ENCODE measurements at regions of chr9 and their contacts with region 1.

Region 1: DNA sequence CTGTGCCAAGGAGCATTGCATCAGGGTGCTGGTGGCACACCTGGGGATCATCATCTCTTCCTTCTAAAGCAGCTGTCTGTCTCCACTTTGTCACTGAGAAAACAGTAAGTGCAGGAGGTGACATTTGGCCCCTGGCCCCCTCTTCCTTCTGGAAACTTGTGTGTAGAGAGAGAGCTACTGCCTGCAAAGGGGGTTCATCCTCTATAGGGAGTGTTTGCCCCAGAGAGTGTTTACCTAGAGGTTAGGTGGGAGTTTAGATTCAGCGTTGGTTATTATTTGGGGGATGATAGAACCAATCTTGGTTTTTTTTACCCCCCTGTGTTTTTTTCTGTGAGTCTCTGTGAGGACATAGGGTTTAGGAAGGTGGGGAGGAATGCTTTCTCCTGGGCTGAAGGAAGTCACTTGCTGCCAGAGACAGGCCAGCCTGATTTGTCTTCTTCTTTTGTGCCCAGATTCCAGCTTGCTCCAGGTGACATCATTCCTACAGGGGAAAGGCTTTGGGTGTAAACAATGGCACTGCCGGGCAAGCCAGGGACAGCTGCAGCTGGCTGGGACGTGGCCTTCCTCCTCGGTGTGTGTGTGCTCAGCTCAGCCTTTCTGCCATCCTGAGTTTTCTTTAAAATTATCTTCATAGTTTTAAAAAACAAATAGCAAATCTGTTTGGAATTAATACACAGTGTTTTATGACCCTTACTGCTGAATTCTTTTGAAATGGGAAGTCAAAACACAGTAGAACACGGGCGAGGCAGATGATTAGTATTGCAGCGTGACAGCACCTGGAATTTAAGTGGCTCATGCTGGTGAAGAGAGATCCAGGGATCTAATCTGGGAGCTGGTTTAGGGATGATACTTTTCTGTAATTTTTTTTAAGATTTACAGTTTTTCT is 24.5 kb downstream of the PRRC2B start:
- DNase-seq: no peak
- ATAC-seq: no peak
- H3K4me3 ChIP-seq: no peak overlapping the region
- H3K4me3 Mint-ChIP-seq: peak overlapping the region; percentile 80
- H3K27ac ChIP-seq: no peak overlapping the region
- H3K27ac Mint-ChIP-seq: peak overlapping the region; percentile 70
- H3K4me1 ChIP-seq: peaks cover 84% of the 10 kb centered on the region
- H3K4me1 Mint-ChIP-seq: peaks cover 95% of the 10 kb centered on the region
- H3K27me3 ChIP-seq: no peaks in the 10 kb centered on the region
- H3K27me3 Mint-ChIP-seq: no peaks in the 10 kb centered on the region
- CTCF ChIP-seq: no peak

Region 2: GRCh38 chr9:131407717-131408195 is 10.6 kb before region 1 on chr9:
- CTCF ChIA-PET with region 1: interaction called, 5 read pairs
- POLR2A ChIA-PET with region 1: interaction called, 18 read pairs
- intact Hi-C with region 1: no loop called
- DNase-seq: peak in 12 of 14 experiments; percentile 26 to 81 (median 52)
- ATAC-seq: peak; percentile 78
- H3K4me3 ChIP-seq: peak overlapping the region; percentile 39
- H3K4me3 Mint-ChIP-seq: peak overlapping the region; percentile 89
- H3K27ac ChIP-seq: peak overlapping the region; percentile 18 to 39
- H3K27ac Mint-ChIP-seq: peak overlapping the region; percentile 86
- H3K4me1 ChIP-seq: peaks cover 93% of the 10 kb centered on the region
- H3K4me1 Mint-ChIP-seq: peaks cover 93% of the 10 kb centered on the region
- H3K27me3 ChIP-seq: no peaks in the 10 kb centered on the region
- H3K27me3 Mint-ChIP-seq: no peaks in the 10 kb centered on the region
- CTCF ChIP-seq: peak; percentile 71

Region 3: DNA sequence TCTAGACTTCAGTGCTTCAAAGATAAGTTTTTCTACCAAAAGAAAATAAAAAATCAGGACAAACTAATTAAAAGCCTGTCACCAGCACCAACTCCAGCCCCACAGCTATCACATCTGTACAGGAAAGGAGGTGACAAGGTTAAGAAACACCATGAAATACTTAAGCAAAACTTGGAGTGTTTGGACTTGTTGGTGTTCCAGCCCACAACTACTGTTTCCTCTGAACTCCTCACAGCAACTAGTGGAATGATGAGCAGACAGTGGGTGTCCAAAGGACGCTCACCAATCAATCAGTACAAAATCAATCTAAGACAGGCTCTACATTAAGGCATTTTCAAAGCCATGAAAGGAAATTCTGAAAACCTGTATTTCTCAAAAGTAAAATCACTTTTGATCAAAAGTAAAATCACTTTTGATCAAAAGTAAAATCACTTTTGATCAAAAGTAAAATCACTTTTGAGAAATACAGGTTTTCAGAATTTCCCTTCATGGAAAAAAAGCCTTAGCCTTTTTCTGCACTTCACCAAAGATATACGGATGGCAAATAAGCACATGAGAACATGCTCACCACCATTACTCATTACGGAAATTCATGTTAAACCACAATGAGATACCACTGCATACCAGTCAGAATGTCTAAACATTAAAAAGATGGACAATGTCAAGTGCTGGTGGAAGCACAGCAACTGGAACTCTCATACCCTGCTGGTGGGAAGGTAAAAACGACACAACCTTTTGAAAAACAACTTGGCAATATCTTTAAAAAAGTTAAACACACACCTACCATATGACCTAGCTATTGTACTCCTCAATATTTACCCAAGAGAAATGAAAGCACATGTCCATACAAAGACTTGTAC is 581.5 kb after region 1 on chr9:
- CTCF ChIA-PET with region 1: no interaction called
- POLR2A ChIA-PET with region 1: no interaction called
- intact Hi-C with region 1: no loop called
- DNase-seq: peak in 1 of 14 experiments; percentile 15
- ATAC-seq: no peak
- H3K4me3 ChIP-seq: no peak overlapping the region
- H3K4me3 Mint-ChIP-seq: no peak overlapping the region
- H3K27ac ChIP-seq: no peak overlapping the region
- H3K27ac Mint-ChIP-seq: no peak overlapping the region
- H3K4me1 ChIP-seq: no peaks in the 10 kb centered on the region
- H3K4me1 Mint-ChIP-seq: peaks cover 19% of the 10 kb centered on the region
- H3K27me3 ChIP-seq: no peaks in the 10 kb centered on the region
- H3K27me3 Mint-ChIP-seq: no peaks in the 10 kb centered on the region
- CTCF ChIP-seq: no peak

Measured in CD4-positive, alpha-beta T cell (primary cell).